Panc1 (cell line): ENCODE measurements at regions of chr19 and their contacts with region 1.

Region 1: GRCh38 chr19:6292006-6292405 is 12.2 kb upstream of the MLLT1 start:
- DNase-seq: no peak
- ATAC-seq: no peak
- H3K4me3 ChIP-seq: no peak overlapping the region
- H3K27ac ChIP-seq: no peak overlapping the region
- H3K4me1 ChIP-seq: no peaks in the 10 kb centered on the region
- H3K27me3 ChIP-seq: no peaks in the 10 kb centered on the region
- CTCF ChIP-seq: no peak

Region 2: DNA sequence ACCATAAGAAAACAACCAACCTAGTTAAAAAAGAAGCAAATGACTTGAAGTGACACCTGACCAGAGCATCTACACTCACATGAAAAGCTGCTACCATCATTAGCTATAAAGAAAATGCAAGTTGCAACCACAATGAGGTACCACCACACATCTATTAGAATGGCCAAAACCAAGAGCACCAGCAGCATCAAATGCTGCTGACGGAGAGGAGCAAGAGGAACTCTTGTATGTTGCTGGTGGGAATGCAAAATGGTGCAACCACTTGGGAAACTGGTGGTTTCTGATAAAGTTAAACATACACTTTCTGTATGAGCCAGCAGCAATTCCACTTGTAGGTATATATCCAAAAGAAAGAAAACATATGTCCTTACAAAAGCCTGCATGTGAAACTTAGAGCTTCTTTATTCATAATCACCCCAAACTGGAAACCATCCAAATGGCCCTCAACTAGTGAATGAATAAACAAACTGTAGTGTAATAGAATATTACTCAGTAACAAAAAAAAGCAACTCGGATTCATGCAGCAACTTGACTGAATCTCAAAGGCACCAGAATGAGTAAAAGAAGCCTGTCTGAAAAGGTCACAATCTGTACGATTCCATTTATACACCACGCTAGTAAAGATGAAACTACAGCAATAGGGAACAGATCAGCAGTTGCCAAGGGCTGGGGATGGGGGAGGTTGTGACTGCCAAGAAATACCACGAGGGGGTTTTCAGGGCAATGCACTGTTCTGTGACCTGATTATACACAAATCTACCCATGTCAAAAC is 253.2 kb before region 1 on chr19:
- CTCF ChIA-PET with region 1: no interaction called
- POLR2A ChIA-PET with region 1: no interaction called
- in situ Hi-C with region 1: no loop called
- intact Hi-C with region 1: no loop called
- DNase-seq: no peak
- ATAC-seq: no peak
- H3K4me3 ChIP-seq: no peak overlapping the region
- H3K27ac ChIP-seq: no peak overlapping the region
- H3K4me1 ChIP-seq: no peaks in the 10 kb centered on the region
- H3K27me3 ChIP-seq: no peaks in the 10 kb centered on the region
- CTCF ChIP-seq: no peak

Region 3: GRCh38 chr19:6275170-6275744 is 16.7 kb before region 1 on chr19:
- CTCF ChIA-PET with region 1: interaction called, 6 read pairs
- POLR2A ChIA-PET with region 1: interaction called, 15 read pairs
- in situ Hi-C with region 1: no loop called
- intact Hi-C with region 1: no loop called
- DNase-seq: no peak
- ATAC-seq: no peak
- H3K4me3 ChIP-seq: no peak overlapping the region
- H3K27ac ChIP-seq: no peak overlapping the region
- H3K4me1 ChIP-seq: peaks cover 20% of the 10 kb centered on the region
- H3K27me3 ChIP-seq: no peaks in the 10 kb centered on the region
- CTCF ChIP-seq: no peak

Region 4: DNA sequence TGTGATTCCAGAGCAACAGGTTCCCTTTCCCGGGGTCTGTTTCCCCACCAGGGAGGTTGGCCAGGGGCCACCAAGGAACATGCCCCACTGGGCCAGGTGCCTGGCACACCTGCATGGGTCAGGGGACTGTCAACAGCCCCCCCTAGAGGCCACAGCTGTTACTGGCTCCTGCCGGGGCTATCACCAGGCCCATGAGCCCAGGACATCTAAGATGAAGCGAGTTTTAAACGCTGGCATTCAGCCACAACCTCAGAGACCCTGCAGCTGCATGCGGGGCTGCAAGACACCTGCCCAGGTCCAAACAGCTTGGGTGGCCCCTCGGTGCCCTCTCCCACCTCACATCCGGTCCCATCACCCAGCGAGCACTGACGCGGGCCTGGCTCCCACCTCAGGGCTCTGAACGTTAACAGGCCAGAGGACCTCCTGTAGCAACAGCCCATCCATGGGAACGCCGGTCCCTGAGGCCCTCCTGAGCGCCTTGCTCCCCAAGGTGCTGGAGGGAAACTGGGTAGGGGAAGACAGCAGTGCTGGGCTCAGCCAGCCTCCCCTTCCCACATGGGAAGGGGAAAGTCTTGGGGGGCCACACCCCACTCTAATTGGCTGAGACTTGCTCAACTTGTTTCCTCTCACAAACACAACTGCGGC is 120.6 kb after region 1 on chr19:
- CTCF ChIA-PET with region 1: no interaction called
- POLR2A ChIA-PET with region 1: no interaction called
- in situ Hi-C with region 1: no loop called
- intact Hi-C with region 1: no loop called
- DNase-seq: no peak
- ATAC-seq: peak; percentile 77
- H3K4me3 ChIP-seq: no peak overlapping the region
- H3K27ac ChIP-seq: no peak overlapping the region
- H3K4me1 ChIP-seq: no peaks in the 10 kb centered on the region
- H3K27me3 ChIP-seq: no peaks in the 10 kb centered on the region
- CTCF ChIP-seq: peak; percentile 78